ENCODE measurements at regions of chr5 and their contacts with region 1.

Region 1: GRCh38 chr5:91419571-91420537 is 36.7 kb upstream of the ARRDC3 start:
- DNase-seq: peak; percentile 33 to 84 (median 64)
- ATAC-seq: peak in 2 of 4 experiments; percentile 34 to 37
- H3K4me3 ChIP-seq: no peak overlapping the region
- H3K4me3 Mint-ChIP-seq: no peak overlapping the region
- H3K27ac ChIP-seq: no peak overlapping the region
- H3K27ac Mint-ChIP-seq: no peak overlapping the region
- H3K4me1 ChIP-seq: peaks cover 0 to 2% of the 10 kb centered on the region in 2 experiments
- H3K4me1 Mint-ChIP-seq: peaks cover 13 to 21% (median 16%) of the 10 kb centered on the region in 3 donors
- H3K27me3 ChIP-seq: no peaks in the 10 kb centered on the region
- H3K27me3 Mint-ChIP-seq: no peaks in the 10 kb centered on the region

Region 2: GRCh38 chr5:90866333-90866732 is 553.5 kb before region 1 on chr5:
- CTCF ChIA-PET with region 1: interaction called, 29 to 41 read pairs
- POLR2A ChIA-PET with region 1: interaction called in 1 of 2 experiments, 3 read pairs
- DNase-seq: peak in 1 of 35 experiments; percentile 50
- ATAC-seq: peak in 3 of 4 experiments; percentile 42 to 51 (median 43)
- H3K4me3 ChIP-seq: no peak overlapping the region
- H3K4me3 Mint-ChIP-seq: no peak overlapping the region
- H3K27ac ChIP-seq: no peak overlapping the region
- H3K27ac Mint-ChIP-seq: no peak overlapping the region
- H3K4me1 ChIP-seq: no peaks in the 10 kb centered on the region
- H3K4me1 Mint-ChIP-seq: peaks cover 9 to 11% (median 9%) of the 10 kb centered on the region in 3 donors
- H3K27me3 ChIP-seq: no peaks in the 10 kb centered on the region
- H3K27me3 Mint-ChIP-seq: peaks cover 0 to 9% of the 10 kb centered on the region in 2 donors

Region 3: DNA sequence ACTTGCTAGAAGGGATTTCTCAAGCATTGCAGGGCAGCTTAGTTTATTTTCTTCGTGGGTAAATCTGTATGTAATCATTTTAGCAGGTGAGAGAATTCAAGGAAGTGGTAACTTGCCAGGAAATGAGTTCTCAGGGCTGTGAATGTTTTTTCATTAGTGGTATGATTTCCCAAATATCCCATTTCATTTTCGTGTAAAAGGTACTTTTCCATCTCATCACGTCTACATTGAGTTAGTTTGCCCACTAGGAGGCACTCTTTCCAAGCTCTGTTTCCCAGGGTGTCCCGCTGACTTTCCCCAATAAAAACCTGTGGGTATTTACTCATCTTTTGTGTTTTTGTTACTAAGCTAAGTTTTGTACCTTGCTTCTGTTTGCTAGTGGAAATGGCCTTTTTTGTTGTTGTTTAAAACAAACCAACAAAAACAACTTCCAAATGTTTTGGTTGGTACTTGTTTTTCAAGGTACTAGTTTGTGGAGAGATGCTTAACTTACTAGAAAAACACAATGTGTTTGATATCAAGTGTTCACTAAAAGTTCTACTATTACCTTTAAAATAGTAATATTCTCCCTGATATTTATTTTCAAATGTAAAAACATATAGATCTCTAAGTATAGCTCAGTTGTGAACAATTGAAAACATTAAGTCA is 487.7 kb before region 1 on chr5:
- CTCF ChIA-PET with region 1: interaction called, 18 to 41 read pairs
- POLR2A ChIA-PET with region 1: no interaction called
- DNase-seq: peak in 18 of 35 experiments; percentile 0 to 62 (median 5)
- ATAC-seq: no peak
- H3K4me3 ChIP-seq: no peak overlapping the region
- H3K4me3 Mint-ChIP-seq: no peak overlapping the region
- H3K27ac ChIP-seq: no peak overlapping the region
- H3K27ac Mint-ChIP-seq: no peak overlapping the region
- H3K4me1 ChIP-seq: no peaks in the 10 kb centered on the region
- H3K4me1 Mint-ChIP-seq: peaks cover 0 to 4% (median 2%) of the 10 kb centered on the region in 3 donors
- H3K27me3 ChIP-seq: no peaks in the 10 kb centered on the region
- H3K27me3 Mint-ChIP-seq: peaks cover 9 to 11% of the 10 kb centered on the region in 2 donors

Region 4: GRCh38 chr5:91101600-91102379 is 318.1 kb before region 1 on chr5:
- CTCF ChIA-PET with region 1: interaction called, 8 to 12 read pairs
- POLR2A ChIA-PET with region 1: interaction called in 1 of 2 experiments, 3 read pairs
- DNase-seq: peak in 32 of 35 experiments; percentile 1 to 66 (median 28)
- ATAC-seq: peak; percentile 62 to 82 (median 66)
- H3K4me3 ChIP-seq: no peak overlapping the region
- H3K4me3 Mint-ChIP-seq: no peak overlapping the region
- H3K27ac ChIP-seq: no peak overlapping the region
- H3K27ac Mint-ChIP-seq: no peak overlapping the region
- H3K4me1 ChIP-seq: no peaks in the 10 kb centered on the region
- H3K4me1 Mint-ChIP-seq: no peaks in the 10 kb centered on the region
- H3K27me3 ChIP-seq: peaks cover 0 to 4% of the 10 kb centered on the region in 2 experiments
- H3K27me3 Mint-ChIP-seq: peaks cover 6 to 8% of the 10 kb centered on the region in 2 donors

Region 5: GRCh38 chr5:91219803-91220371 is 200.0 kb before region 1 on chr5:
- CTCF ChIA-PET with region 1: interaction called, 9 to 28 read pairs
- POLR2A ChIA-PET with region 1: interaction called in 1 of 2 experiments, 6 read pairs
- DNase-seq: peak in 22 of 35 experiments; percentile 2 to 53 (median 16)
- ATAC-seq: no peak
- H3K4me3 ChIP-seq: no peak overlapping the region
- H3K4me3 Mint-ChIP-seq: no peak overlapping the region
- H3K27ac ChIP-seq: no peak overlapping the region
- H3K27ac Mint-ChIP-seq: no peak overlapping the region
- H3K4me1 ChIP-seq: no peaks in the 10 kb centered on the region
- H3K4me1 Mint-ChIP-seq: no peaks in the 10 kb centered on the region
- H3K27me3 ChIP-seq: peaks cover 0 to 7% of the 10 kb centered on the region in 2 experiments
- H3K27me3 Mint-ChIP-seq: no peaks in the 10 kb centered on the region

Region 6: DNA sequence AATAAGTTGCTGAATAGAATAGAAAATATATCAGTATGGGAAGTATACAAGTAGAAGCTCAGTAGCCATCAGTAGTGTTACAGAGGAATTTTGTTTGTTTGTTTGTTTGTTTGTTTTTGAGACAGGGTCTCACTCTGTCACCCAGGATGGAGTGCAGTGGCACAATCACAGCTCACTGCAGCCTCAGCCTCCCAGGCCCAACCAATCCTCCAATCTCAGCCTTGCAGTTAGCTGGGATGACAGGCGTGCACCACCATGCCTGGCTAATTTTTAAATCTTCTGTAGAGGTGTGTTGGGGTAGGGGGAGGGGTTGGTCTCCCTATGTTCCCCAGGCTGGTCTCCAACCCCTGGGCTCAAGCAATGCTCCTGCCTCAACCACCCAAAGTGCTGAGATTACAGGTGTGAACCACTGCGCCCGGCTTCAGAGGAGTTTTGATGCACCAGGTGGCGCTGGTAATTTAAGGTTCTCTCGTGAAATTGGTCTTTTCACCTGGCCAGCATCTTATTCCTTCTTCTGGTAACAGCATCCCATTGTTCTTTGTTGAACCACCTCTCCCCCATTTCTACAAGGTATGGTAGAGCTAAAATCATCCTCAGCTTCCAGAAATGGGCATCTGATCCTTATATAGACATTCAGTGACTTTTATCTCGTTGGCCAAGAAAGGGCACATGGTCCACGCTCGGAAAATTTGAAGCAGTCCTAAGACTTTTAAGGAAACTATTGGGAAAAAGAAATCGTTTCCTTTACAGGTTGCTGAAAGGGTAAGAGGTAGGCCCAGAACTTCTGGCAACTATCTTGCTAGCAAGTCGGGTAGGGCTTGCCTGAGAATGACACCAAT is 193.8 kb before region 1 on chr5:
- CTCF ChIA-PET with region 1: interaction called, 4 to 46 read pairs
- POLR2A ChIA-PET with region 1: no interaction called
- DNase-seq: peak; percentile 6 to 74 (median 47)
- ATAC-seq: peak; percentile 57 to 74 (median 72)
- H3K4me3 ChIP-seq: no peak overlapping the region
- H3K4me3 Mint-ChIP-seq: no peak overlapping the region
- H3K27ac ChIP-seq: no peak overlapping the region
- H3K27ac Mint-ChIP-seq: no peak overlapping the region
- H3K4me1 ChIP-seq: no peaks in the 10 kb centered on the region
- H3K4me1 Mint-ChIP-seq: no peaks in the 10 kb centered on the region
- H3K27me3 ChIP-seq: no peaks in the 10 kb centered on the region
- H3K27me3 Mint-ChIP-seq: peaks cover 3 to 4% of the 10 kb centered on the region in 2 donors

Region 7: DNA sequence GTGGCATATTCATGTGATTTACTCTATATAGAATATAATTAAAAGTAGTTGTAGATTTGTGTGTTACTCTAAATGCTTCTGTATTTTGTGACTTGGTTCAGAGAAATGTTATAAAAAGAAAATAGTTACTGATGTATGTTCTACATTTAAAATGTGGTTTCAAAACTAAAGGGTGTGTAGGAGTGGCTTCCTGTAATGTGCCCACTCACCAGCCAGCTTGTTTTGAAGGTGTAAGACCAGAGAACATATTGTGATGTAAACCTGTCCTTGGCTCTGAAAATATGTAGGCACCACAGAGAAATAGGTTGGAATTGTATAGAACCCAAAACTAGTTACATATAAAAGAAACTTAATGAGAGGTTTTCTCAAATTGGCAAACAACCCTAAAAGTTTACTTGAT is 14.5 kb after region 1 on chr5:
- CTCF ChIA-PET with region 1: interaction called, 16 to 27 read pairs
- POLR2A ChIA-PET with region 1: interaction called in 1 of 2 experiments, 3 read pairs
- DNase-seq: peak in 20 of 35 experiments; percentile 0 to 52 (median 6)
- ATAC-seq: peak; percentile 71 to 90 (median 81)
- H3K4me3 ChIP-seq: no peak overlapping the region
- H3K4me3 Mint-ChIP-seq: peak overlapping the region in 2 of 3 donors; percentile 21 to 50
- H3K27ac ChIP-seq: peak overlapping the region; percentile 22
- H3K27ac Mint-ChIP-seq: peak overlapping the region; percentile 89 to 98
- H3K4me1 ChIP-seq: peaks cover 8 to 16% of the 10 kb centered on the region in 2 experiments
- H3K4me1 Mint-ChIP-seq: peaks cover 32 to 39% (median 36%) of the 10 kb centered on the region in 3 donors
- H3K27me3 ChIP-seq: no peaks in the 10 kb centered on the region
- H3K27me3 Mint-ChIP-seq: no peaks in the 10 kb centered on the region

Measured in T-cell (primary cell).